Spleen (tissue), 13 donors: ENCODE measurements at regions of chr13 and their contacts with region 1.

Region 1: GRCh38 chr13:78978381-78978998 is 319.5 kb upstream of the OBI1 start:
- DNase-seq: no peak
- H3K4me3 ChIP-seq: no peak overlapping the region
- H3K27ac ChIP-seq: no peak overlapping the region
- H3K4me1 ChIP-seq: no peaks in the 10 kb centered on the region
- H3K27me3 ChIP-seq: no peaks in the 10 kb centered on the region
- CTCF ChIP-seq: peak in 10 of 11 experiments; percentile 26 to 77 (median 64)
- POLR2A ChIP-seq: no peak

Region 2: GRCh38 chr13:78137404-78138142 is 840.9 kb before region 1 on chr13:
- intact Hi-C with region 1: loop called (anchors 5 kb)
- DNase-seq: no peak
- H3K4me3 ChIP-seq: peak overlapping the region in 2 of 8 donors; percentile 13 to 55
- H3K27ac ChIP-seq: no peak overlapping the region
- H3K4me1 ChIP-seq: peaks cover 0 to 8% (median 6%) of the 10 kb centered on the region in 6 donors
- H3K27me3 ChIP-seq: no peaks in the 10 kb centered on the region
- CTCF ChIP-seq: peak in 10 of 11 experiments; percentile 24 to 79 (median 68)
- POLR2A ChIP-seq: no peak

Region 3: DNA sequence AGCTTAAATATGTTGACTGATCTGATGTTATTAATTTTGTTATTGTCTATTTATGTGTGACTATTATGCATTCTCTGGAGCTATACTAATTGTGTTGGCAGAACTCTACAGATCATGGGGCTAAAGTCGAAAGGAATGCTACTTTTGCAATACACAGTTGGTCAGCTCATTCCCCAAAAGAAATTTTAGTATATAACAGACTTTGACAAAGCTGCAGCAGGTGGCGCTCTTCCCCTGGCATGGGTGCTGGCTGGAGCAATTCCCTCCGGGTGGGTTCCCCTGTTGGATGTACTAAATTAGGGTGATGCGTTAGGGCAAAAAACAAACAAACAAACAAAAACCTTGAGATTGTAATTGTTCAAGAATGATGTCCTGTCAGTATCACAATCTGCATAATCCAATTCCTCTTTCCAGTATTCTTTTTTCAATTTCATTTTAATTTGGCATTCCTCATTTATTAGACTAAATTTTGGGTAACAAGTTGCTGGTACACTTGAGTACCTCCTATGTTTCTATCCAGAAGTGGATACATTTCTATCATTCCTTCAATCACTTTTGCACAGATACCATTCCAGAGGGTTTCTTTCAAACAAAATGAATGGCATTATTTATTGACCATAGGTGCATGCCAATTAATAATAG is 737.1 kb before region 1 on chr13:
- intact Hi-C with region 1: loop called (anchors 5 kb)
- DNase-seq: no peak
- H3K4me3 ChIP-seq: no peak overlapping the region
- H3K27ac ChIP-seq: no peak overlapping the region
- H3K4me1 ChIP-seq: no peaks in the 10 kb centered on the region
- H3K27me3 ChIP-seq: no peaks in the 10 kb centered on the region
- CTCF ChIP-seq: peak in 5 of 11 experiments; percentile 10 to 27 (median 23)
- POLR2A ChIP-seq: no peak